MCF 10A (cell line): ENCODE measurements at regions of chr13 and their contacts with region 1.

Region 1: DNA sequence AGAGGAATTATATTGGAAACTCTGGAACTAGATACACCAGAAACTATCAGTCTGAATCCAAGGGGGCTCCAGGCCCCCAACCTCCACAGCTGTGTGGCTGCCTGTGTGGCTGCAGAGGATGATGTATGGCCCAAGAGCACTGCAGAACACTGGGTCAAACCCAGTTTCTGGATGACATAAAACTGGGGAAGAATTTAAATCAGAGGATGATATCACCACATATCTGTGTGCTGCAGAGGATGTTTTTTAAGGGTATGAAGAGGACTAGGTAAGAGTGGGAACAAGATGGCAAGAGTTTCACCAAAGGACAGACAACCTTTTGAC is 226.4 kb downstream of the SUCLA2 start:
- DNase-seq: no peak
- H3K4me3 Mint-ChIP-seq: no peak overlapping the region
- H3K27ac Mint-ChIP-seq: no peak overlapping the region
- H3K4me1 Mint-ChIP-seq: no peaks in the 10 kb centered on the region
- H3K27me3 Mint-ChIP-seq: no peaks in the 10 kb centered on the region
- CTCF ChIP-seq: no peak

Region 2: GRCh38 chr13:46831588-46832194 is 942.9 kb before region 1 on chr13:
- CTCF ChIA-PET with region 1: interaction called, 18 read pairs
- POLR2A ChIA-PET with region 1: interaction called, 5 read pairs
- intact Hi-C with region 1: loop called (anchors 1 kb)
- DNase-seq: peak; percentile 62
- H3K4me3 Mint-ChIP-seq: no peak overlapping the region
- H3K27ac Mint-ChIP-seq: no peak overlapping the region
- H3K4me1 Mint-ChIP-seq: no peaks in the 10 kb centered on the region
- H3K27me3 Mint-ChIP-seq: no peaks in the 10 kb centered on the region
- CTCF ChIP-seq: peak; percentile 88

Region 3: GRCh38 chr13:47188802-47189201 is 585.8 kb before region 1 on chr13:
- CTCF ChIA-PET with region 1: no interaction called
- POLR2A ChIA-PET with region 1: no interaction called
- intact Hi-C with region 1: no loop called
- DNase-seq: peak; percentile 67
- H3K4me3 Mint-ChIP-seq: no peak overlapping the region
- H3K27ac Mint-ChIP-seq: no peak overlapping the region
- H3K4me1 Mint-ChIP-seq: peaks cover 7% of the 10 kb centered on the region
- H3K27me3 Mint-ChIP-seq: no peaks in the 10 kb centered on the region
- CTCF ChIP-seq: no peak

Region 4: GRCh38 chr13:47420568-47420967 is 354.1 kb before region 1 on chr13:
- CTCF ChIA-PET with region 1: interaction called, 13 read pairs
- POLR2A ChIA-PET with region 1: no interaction called
- intact Hi-C with region 1: no loop called
- DNase-seq: no peak
- H3K4me3 Mint-ChIP-seq: no peak overlapping the region
- H3K27ac Mint-ChIP-seq: peak overlapping the region; percentile 5
- H3K4me1 Mint-ChIP-seq: no peaks in the 10 kb centered on the region
- H3K27me3 Mint-ChIP-seq: no peaks in the 10 kb centered on the region
- CTCF ChIP-seq: no peak